OCI-LY7 (cell line): ENCODE measurements at regions of chr4 and their contacts with region 1.

Region 1: DNA sequence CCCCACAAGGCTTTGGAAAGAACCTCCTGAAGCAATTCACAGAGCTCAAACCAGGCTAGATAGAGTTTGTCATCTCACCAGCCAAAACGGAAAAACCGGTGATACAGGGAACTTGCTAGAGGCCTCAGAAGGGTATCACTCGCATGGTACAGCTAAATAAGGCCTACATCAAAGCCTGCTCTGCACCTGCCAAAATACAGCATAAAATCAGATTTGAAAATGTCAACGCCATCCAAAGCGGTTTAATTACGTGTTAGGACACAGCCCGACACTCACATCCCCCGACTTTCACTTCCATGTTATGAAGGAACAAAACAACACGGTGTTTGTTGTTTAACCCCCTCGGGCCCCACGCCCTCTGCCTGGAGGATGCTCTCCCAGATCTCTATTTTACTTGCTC is 65.0 kb downstream of the MAPK10 start:
- DNase-seq: peak; percentile 40
- H3K4me3 ChIP-seq: no peak overlapping the region
- H3K27ac ChIP-seq: no peak overlapping the region
- H3K4me1 ChIP-seq: peaks cover 10% of the 10 kb centered on the region
- CTCF ChIP-seq: no peak

Region 2: GRCh38 chr4:86359944-86360478 is 65.1 kb after region 1 on chr4 and contains the start of gene MAPK10:
- CTCF ChIA-PET with region 1: no interaction called
- POLR2A ChIA-PET with region 1: interaction called, 5 read pairs
- intact Hi-C with region 1: loop called (anchors 2 kb)
- DNase-seq: peak; percentile 87
- H3K4me3 ChIP-seq: peak within 1 kb of the TSS; percentile 45
- H3K27ac ChIP-seq: no peak within 1 kb of the TSS
- H3K4me1 ChIP-seq: peaks cover 13% of the 10 kb centered on the region
- CTCF ChIP-seq: no peak
- total RNA-seq, gene MAPK10: not detected in 2 replicates

Region 3: GRCh38 chr4:86493460-86493859 is 198.6 kb after region 1 on chr4:
- CTCF ChIA-PET with region 1: no interaction called
- POLR2A ChIA-PET with region 1: no interaction called
- intact Hi-C with region 1: no loop called
- DNase-seq: no peak
- H3K4me3 ChIP-seq: no peak overlapping the region
- H3K27ac ChIP-seq: no peak overlapping the region
- H3K4me1 ChIP-seq: no peaks in the 10 kb centered on the region
- CTCF ChIP-seq: no peak

Region 4: GRCh38 chr4:86741846-86742245 is 447.0 kb after region 1 on chr4:
- CTCF ChIA-PET with region 1: no interaction called
- POLR2A ChIA-PET with region 1: no interaction called
- intact Hi-C with region 1: no loop called
- DNase-seq: no peak
- H3K4me3 ChIP-seq: no peak overlapping the region
- H3K27ac ChIP-seq: no peak overlapping the region
- H3K4me1 ChIP-seq: no peaks in the 10 kb centered on the region
- CTCF ChIP-seq: no peak